Ovary (tissue), 10 donors: ENCODE measurements at regions of chr1 and their contacts with region 1.

Region 1: GRCh38 chr1:43414634-43415223 is 25.0 kb downstream of the SZT2 start:
- DNase-seq: peak in 3 of 5 donors; percentile 49 to 54 (median 52)
- H3K4me3 ChIP-seq: no peak overlapping the region
- H3K27ac ChIP-seq: no peak overlapping the region
- H3K4me1 ChIP-seq: no peaks in the 10 kb centered on the region
- H3K27me3 ChIP-seq: no peaks in the 10 kb centered on the region
- CTCF ChIP-seq: peak; percentile 17 to 51 (median 43)
- EP300 ChIP-seq: no peak
- POLR2A ChIP-seq: no peak

Region 2: GRCh38 chr1:43227143-43227764 is 187.5 kb before region 1 on chr1:
- intact Hi-C with region 1: loop called (anchors 2 to 10 kb)
- DNase-seq: peak; percentile 80 to 90 (median 89)
- H3K4me3 ChIP-seq: no peak overlapping the region
- H3K27ac ChIP-seq: no peak overlapping the region
- H3K4me1 ChIP-seq: peaks cover 7% of the 10 kb centered on the region
- H3K27me3 ChIP-seq: no peaks in the 10 kb centered on the region
- CTCF ChIP-seq: peak; percentile 80 to 94 (median 88)
- EP300 ChIP-seq: no peak
- POLR2A ChIP-seq: no peak

Region 3: GRCh38 chr1:43238085-43238484 is 176.6 kb before region 1 on chr1:
- intact Hi-C with region 1: loop called in 1 of 4 experiments (anchors 10 kb)
- DNase-seq: peak in 4 of 5 donors; percentile 30 to 69 (median 42)
- H3K4me3 ChIP-seq: no peak overlapping the region
- H3K27ac ChIP-seq: no peak overlapping the region
- H3K4me1 ChIP-seq: no peaks in the 10 kb centered on the region
- H3K27me3 ChIP-seq: no peaks in the 10 kb centered on the region
- CTCF ChIP-seq: no peak
- EP300 ChIP-seq: no peak
- POLR2A ChIP-seq: no peak

Region 4: DNA sequence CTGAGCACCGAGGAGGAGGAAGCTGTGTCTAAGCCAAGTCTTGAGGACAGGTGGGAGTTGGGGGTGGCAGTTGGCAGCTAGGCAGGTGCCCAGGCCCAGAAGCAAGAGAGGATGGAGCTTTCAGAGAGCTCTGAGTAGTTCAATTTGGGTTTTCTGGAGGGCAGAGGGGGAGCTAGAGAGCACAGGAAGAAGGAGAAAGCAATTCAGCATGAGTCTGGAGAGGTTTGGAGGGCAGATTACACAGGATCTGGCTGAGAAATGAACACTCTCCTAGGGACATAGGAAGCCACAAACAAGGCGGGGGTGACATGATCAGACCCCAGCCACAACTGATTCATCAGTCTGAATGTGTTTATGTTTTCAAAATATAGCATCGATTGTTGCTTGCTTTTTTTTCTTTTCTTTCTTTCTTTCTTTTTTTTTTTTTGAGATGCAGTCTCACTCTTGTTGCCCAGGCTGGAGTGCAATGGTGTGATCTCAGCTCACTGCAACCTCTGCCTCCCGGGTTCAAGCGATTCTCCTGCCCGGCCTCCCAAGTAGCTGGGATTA is 139.8 kb after region 1 on chr1:
- intact Hi-C with region 1: no loop called
- DNase-seq: no peak
- H3K4me3 ChIP-seq: no peak overlapping the region
- H3K27ac ChIP-seq: peak overlapping the region in 1 of 2 donors; percentile 37
- H3K4me1 ChIP-seq: peaks cover 17% of the 10 kb centered on the region
- H3K27me3 ChIP-seq: no peaks in the 10 kb centered on the region
- CTCF ChIP-seq: no peak
- EP300 ChIP-seq: no peak
- POLR2A ChIP-seq: no peak